HepG2 (cell line): ENCODE measurements at regions of chr2 and their contacts with region 1.

Region 1: DNA sequence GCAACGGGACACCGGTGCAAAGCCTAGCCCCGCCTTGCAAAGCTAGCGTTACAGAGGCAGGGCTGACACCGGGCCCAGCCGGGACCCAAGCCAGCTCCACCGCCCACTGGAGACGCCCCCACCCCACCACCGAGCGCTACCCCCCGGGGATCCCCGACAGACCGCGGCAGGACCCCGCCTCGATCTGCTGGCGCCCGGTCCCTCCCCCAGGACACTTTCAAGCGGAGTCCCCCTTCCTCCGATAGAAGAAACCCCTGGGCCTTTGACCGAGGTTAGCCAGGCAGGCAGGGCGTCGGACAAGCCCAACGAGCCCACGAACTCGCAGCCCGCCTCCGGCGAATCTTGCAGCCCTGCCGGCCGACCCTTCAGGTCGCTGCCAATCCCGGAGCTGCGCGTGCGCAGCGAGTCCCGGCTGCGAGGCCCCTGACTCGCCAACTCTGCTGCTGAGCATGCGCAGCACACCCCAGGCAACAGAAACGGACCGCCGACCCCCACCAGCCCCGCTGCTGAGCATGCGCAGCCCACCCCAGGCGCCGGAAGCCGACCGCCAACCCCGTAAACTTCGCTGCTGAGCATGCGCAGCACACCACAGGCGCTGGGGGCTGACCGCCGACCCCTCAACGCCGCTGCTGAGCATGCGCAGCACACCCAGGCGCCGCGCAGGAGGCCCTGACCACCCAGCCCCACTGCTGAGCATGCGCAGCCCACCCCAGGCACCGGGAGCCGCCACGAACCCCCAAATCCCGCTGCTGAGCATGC is 656 bp downstream of the ADI1 start:
- DNase-seq: peak; percentile 97
- ATAC-seq: peak; percentile 70
- H3K4me3 ChIP-seq: peak overlapping the region; percentile 67 to 88 (median 81)
- H3K27ac ChIP-seq: peak overlapping the region; percentile 96
- H3K4me1 ChIP-seq: peaks cover 74% of the 10 kb centered on the region
- H3K27me3 ChIP-seq: no peaks in the 10 kb centered on the region
- CTCF ChIP-seq: peak; percentile 17; the same call in 1 of the 2 replicates
- EP300 ChIP-seq: no peak
- POLR2A ChIP-seq: peak in 1 of 2 experiments; percentile 91; a peak in 2 of 4 replicates
- RAD21 ChIP-seq: peak; percentile 40

Region 2: GRCh38 chr2:3334392-3335345 is 184.0 kb before region 1 on chr2:
- CTCF ChIA-PET with region 1: no interaction called
- POLR2A ChIA-PET with region 1: no interaction called
- in situ Hi-C with region 1: no loop called
- intact Hi-C with region 1: no loop called
- DNase-seq: no peak
- ATAC-seq: no peak
- H3K4me3 ChIP-seq: no peak overlapping the region
- H3K27ac ChIP-seq: no peak overlapping the region
- H3K4me1 ChIP-seq: no peaks in the 10 kb centered on the region
- H3K27me3 ChIP-seq: no peaks in the 10 kb centered on the region
- CTCF ChIP-seq: no peak
- EP300 ChIP-seq: no peak
- POLR2A ChIP-seq: no peak
- RAD21 ChIP-seq: no peak

Region 3: DNA sequence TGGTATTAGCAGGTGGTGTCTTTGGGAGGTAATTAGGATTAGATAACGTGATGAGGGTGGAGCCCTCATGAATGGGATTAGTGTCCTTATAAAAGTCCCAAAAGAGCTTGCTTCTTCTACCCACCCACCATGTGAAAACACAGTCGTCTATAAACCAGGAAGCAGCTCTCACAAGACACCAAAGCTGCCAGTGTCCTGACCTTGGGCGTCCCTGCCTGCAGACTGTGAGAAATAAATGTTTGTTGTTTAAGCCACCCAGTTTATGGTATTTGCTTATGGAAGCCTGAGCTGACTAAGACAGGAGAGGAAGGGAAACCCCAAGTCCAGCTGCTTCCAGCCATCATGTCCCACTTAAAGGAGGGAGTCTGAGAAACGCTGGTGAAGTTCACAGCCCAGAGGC is 12.9 kb before region 1 on chr2:
- CTCF ChIA-PET with region 1: no interaction called
- POLR2A ChIA-PET with region 1: interaction called, 19 read pairs
- in situ Hi-C with region 1: no loop called
- intact Hi-C with region 1: no loop called
- DNase-seq: no peak
- ATAC-seq: peak; percentile 48
- H3K4me3 ChIP-seq: no peak overlapping the region
- H3K27ac ChIP-seq: no peak overlapping the region
- H3K4me1 ChIP-seq: peaks cover 12% of the 10 kb centered on the region
- H3K27me3 ChIP-seq: no peaks in the 10 kb centered on the region
- CTCF ChIP-seq: no peak
- EP300 ChIP-seq: no peak
- POLR2A ChIP-seq: no peak
- RAD21 ChIP-seq: no peak

Region 4: GRCh38 chr2:3575534-3576262 is 57.0 kb after region 1 on chr2:
- CTCF ChIA-PET with region 1: no interaction called
- POLR2A ChIA-PET with region 1: interaction called, 5 read pairs
- in situ Hi-C with region 1: no loop called
- intact Hi-C with region 1: loop called (anchors 1 kb)
- DNase-seq: no peak
- ATAC-seq: peak; percentile 63
- H3K4me3 ChIP-seq: peak overlapping the region; percentile 89 to 100 (median 91)
- H3K27ac ChIP-seq: peak overlapping the region; percentile 84
- H3K4me1 ChIP-seq: peaks cover 63% of the 10 kb centered on the region
- H3K27me3 ChIP-seq: no peaks in the 10 kb centered on the region; a peak in 1 of 5 replicates
- CTCF ChIP-seq: no peak; the same call in 1 of the 2 replicates
- EP300 ChIP-seq: no peak
- POLR2A ChIP-seq: no peak
- RAD21 ChIP-seq: no peak

Region 5: GRCh38 chr2:3839476-3839875 is 320.8 kb after region 1 on chr2:
- CTCF ChIA-PET with region 1: no interaction called
- POLR2A ChIA-PET with region 1: no interaction called
- in situ Hi-C with region 1: no loop called
- intact Hi-C with region 1: no loop called
- DNase-seq: no peak
- ATAC-seq: no peak
- H3K4me3 ChIP-seq: no peak overlapping the region
- H3K27ac ChIP-seq: no peak overlapping the region
- H3K4me1 ChIP-seq: no peaks in the 10 kb centered on the region
- H3K27me3 ChIP-seq: peaks cover 0 to 32% of the 10 kb centered on the region in 2 experiments; a peak in 1 of 5 replicates
- CTCF ChIP-seq: no peak
- EP300 ChIP-seq: no peak
- POLR2A ChIP-seq: no peak
- RAD21 ChIP-seq: no peak